CD8-positive, alpha-beta memory T cell (primary cell): ENCODE measurements at regions of chrX and their contacts with region 1.

Region 1: DNA sequence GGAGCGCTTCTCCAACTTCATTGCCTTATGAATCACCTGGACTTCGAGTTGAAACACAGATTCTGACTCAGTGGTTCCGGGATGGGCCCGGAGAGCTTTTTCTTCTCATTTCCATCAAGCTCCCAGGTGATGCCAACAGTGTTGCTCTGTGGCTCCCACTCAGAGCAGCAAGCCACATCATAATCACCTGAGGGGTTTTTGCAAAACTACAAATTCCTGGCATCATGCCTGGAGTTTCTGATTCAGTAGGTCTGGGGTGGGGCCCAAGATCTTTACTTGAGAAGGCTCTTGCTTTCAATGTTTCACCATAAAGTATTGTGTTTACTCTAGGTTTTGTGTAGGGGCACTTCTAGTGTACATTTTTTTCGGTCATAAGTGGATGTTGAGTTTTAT is 7.0 kb downstream of the MTM1 start:
- DNase-seq: peak; percentile 1 to 62 (median 26)
- H3K4me3 ChIP-seq: peak overlapping the region; percentile 49
- H3K4me3 Mint-ChIP-seq: peak overlapping the region; percentile 67 to 86 (median 79)
- H3K27ac ChIP-seq: no peak overlapping the region
- H3K27ac Mint-ChIP-seq: peak overlapping the region; percentile 61 to 93 (median 86)
- H3K4me1 ChIP-seq: peaks cover 73% of the 10 kb centered on the region
- H3K4me1 Mint-ChIP-seq: peaks cover 77 to 87% (median 86%) of the 10 kb centered on the region in 3 donors
- H3K27me3 ChIP-seq: no peaks in the 10 kb centered on the region
- H3K27me3 Mint-ChIP-seq: peaks cover 0 to 3% of the 10 kb centered on the region in 2 donors

Region 2: DNA sequence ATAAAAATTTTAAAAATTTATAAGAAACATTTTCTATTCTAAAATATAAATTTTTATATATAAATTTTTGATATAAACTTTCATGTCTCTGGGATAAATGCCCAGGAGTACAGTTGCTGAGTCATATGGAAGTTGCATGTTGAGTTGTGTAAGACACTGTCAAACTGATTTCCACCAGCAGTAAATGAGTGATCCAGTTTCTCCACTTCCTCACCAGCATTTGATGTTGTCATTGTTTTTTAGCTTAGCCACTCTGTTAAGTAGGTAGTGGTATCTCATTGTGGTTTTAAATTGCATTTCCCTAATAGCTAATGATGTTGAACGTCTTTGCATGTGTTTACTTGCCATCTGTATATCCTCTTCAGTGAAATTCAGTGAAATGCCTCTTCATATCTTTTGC is 145.8 kb before region 1 on chrX:
- CTCF ChIA-PET with region 1: no interaction called
- POLR2A ChIA-PET with region 1: no interaction called
- DNase-seq: no peak
- H3K4me3 ChIP-seq: no peak overlapping the region
- H3K4me3 Mint-ChIP-seq: no peak overlapping the region
- H3K27ac ChIP-seq: no peak overlapping the region
- H3K27ac Mint-ChIP-seq: no peak overlapping the region
- H3K4me1 ChIP-seq: no peaks in the 10 kb centered on the region
- H3K4me1 Mint-ChIP-seq: peaks cover 0 to 6% (median 0%) of the 10 kb centered on the region in 3 donors
- H3K27me3 ChIP-seq: no peaks in the 10 kb centered on the region
- H3K27me3 Mint-ChIP-seq: no peaks in the 10 kb centered on the region

Region 3: GRCh38 chrX:150478496-150479492 is 96.6 kb before region 1 on chrX:
- CTCF ChIA-PET with region 1: no interaction called
- POLR2A ChIA-PET with region 1: no interaction called
- DNase-seq: no peak
- H3K4me3 ChIP-seq: peak overlapping the region; percentile 22
- H3K4me3 Mint-ChIP-seq: peak overlapping the region; percentile 74 to 87 (median 80)
- H3K27ac ChIP-seq: no peak overlapping the region
- H3K27ac Mint-ChIP-seq: peak overlapping the region; percentile 39 to 93 (median 78)
- H3K4me1 ChIP-seq: peaks cover 20% of the 10 kb centered on the region
- H3K4me1 Mint-ChIP-seq: peaks cover 23 to 47% (median 38%) of the 10 kb centered on the region in 3 donors
- H3K27me3 ChIP-seq: no peaks in the 10 kb centered on the region
- H3K27me3 Mint-ChIP-seq: peaks cover 0 to 6% of the 10 kb centered on the region in 2 donors

Region 4: GRCh38 chrX:150587585-150588503 is 12.4 kb after region 1 on chrX:
- CTCF ChIA-PET with region 1: interaction called, 14 read pairs
- POLR2A ChIA-PET with region 1: interaction called, 3 read pairs
- DNase-seq: peak; percentile 19 to 64 (median 27)
- H3K4me3 ChIP-seq: no peak overlapping the region
- H3K4me3 Mint-ChIP-seq: no peak overlapping the region
- H3K27ac ChIP-seq: no peak overlapping the region
- H3K27ac Mint-ChIP-seq: peak overlapping the region in 1 of 8 donors; percentile 14
- H3K4me1 ChIP-seq: no peaks in the 10 kb centered on the region
- H3K4me1 Mint-ChIP-seq: peaks cover 4 to 31% (median 17%) of the 10 kb centered on the region in 3 donors
- H3K27me3 ChIP-seq: no peaks in the 10 kb centered on the region
- H3K27me3 Mint-ChIP-seq: no peaks in the 10 kb centered on the region